ENCODE measurements at regions of chr1 and their contacts with region 1.

Region 1: DNA sequence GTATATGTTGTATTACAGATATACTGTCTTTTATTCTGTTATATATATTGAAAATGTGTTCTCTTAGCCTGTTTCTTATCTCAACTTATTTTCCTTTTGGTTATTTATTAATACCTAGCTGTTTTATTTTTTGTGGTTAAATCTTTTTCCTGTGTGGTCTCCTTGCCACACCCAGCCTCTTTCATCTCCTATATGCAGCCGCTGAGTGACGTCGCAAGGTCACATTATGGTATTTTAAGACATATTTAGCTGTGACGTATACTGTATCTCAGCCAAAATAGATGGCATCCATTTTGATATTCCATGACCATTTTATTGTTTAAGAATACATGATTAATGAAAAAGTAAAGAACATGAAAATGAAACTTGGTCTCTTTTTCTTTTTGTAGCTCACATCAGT is 29.1 kb downstream of the CENPF start:
- DNase-seq: peak; percentile 54
- ATAC-seq: no peak
- H3K4me3 Mint-ChIP-seq: no peak overlapping the region
- H3K27ac Mint-ChIP-seq: peak overlapping the region; percentile 44
- H3K4me1 Mint-ChIP-seq: peaks cover 16% of the 10 kb centered on the region
- H3K27me3 Mint-ChIP-seq: no peaks in the 10 kb centered on the region

Region 2: DNA sequence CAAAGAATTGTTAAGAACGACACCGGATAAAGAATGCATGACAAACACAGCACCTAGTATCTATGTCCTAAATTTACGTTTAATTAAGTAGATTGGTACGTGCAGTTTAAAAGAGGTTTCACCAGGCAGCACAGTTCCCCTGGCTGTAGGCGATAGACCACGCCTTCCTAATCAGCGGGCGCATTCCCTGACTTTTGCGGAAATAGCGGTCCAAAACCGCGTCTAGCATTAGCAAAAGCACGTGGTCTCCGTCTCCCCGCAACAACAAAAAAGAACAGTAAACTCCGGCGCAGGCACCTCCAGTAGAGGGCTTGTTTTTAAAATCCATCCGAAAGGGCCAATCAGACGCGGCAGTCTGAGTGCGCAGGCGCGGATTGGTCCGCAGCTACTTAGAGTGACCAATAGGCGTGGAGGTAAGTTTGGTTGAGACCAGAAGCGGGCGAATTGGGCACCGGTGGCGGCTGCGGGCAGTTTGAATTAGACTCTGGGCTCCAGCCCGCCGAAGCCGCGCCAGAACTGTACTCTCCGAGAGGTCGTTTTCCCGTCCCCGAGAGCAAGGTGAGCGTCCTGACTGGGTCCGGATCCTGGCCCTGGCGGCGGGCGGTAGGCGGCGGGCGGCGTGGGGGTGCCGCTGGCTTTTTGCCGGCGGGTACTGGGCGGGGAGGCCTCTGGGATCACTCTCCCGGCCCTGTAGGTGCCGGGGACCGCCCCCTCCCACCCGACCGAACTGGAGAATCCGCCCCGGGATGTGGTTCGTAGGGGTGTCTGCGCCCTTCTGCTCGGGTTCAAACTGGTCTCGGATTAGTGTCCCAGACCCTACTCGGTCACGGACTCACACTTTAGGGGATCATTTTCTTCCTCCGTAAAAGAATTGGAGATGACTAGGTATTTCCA is 29.1 kb before region 1 on chr1 and contains the start of gene CENPF:
- CTCF ChIA-PET with region 1: interaction called, 12 read pairs
- POLR2A ChIA-PET with region 1: no interaction called
- DNase-seq: peak; percentile 97
- ATAC-seq: peak; percentile 98
- H3K4me3 Mint-ChIP-seq: peak within 1 kb of the TSS; percentile 92
- H3K27ac Mint-ChIP-seq: peak within 1 kb of the TSS; percentile 96
- H3K4me1 Mint-ChIP-seq: peaks cover 25% of the 10 kb centered on the region
- H3K27me3 Mint-ChIP-seq: no peaks in the 10 kb centered on the region
- total RNA-seq, gene CENPF: 176 to 180 TPM

Region 3: GRCh38 chr1:214617843-214618242 is 14.2 kb before region 1 on chr1:
- CTCF ChIA-PET with region 1: interaction called, 15 read pairs
- POLR2A ChIA-PET with region 1: no interaction called
- DNase-seq: no peak
- ATAC-seq: no peak
- H3K4me3 Mint-ChIP-seq: no peak overlapping the region
- H3K27ac Mint-ChIP-seq: no peak overlapping the region
- H3K4me1 Mint-ChIP-seq: peaks cover 20% of the 10 kb centered on the region
- H3K27me3 Mint-ChIP-seq: no peaks in the 10 kb centered on the region

Region 4: GRCh38 chr1:214648801-214649200 is 16.7 kb after region 1 on chr1:
- CTCF ChIA-PET with region 1: interaction called, 30 read pairs
- POLR2A ChIA-PET with region 1: no interaction called
- DNase-seq: no peak
- ATAC-seq: no peak
- H3K4me3 Mint-ChIP-seq: no peak overlapping the region
- H3K27ac Mint-ChIP-seq: no peak overlapping the region
- H3K4me1 Mint-ChIP-seq: no peaks in the 10 kb centered on the region
- H3K27me3 Mint-ChIP-seq: no peaks in the 10 kb centered on the region

Region 5: DNA sequence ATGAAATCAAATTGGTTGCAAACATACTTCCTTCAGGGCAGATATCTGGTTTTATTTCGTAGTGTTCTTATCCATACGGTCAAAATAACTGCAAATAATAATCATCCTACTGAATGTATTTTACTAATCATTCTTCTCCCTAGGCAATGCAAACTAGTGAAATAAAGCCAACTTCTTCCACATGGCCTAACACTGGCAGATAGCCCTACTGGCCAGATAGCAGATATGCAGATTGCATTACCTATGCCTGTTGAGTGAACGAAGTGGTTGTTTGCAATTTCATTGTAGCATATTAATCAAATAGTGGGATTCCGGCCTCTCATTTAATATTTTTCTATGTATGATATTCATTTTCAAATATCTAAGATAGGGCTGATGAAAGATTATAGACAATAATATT is 87.1 kb after region 1 on chr1:
- CTCF ChIA-PET with region 1: no interaction called
- POLR2A ChIA-PET with region 1: no interaction called
- DNase-seq: no peak
- ATAC-seq: no peak
- H3K4me3 Mint-ChIP-seq: no peak overlapping the region
- H3K27ac Mint-ChIP-seq: no peak overlapping the region
- H3K4me1 Mint-ChIP-seq: no peaks in the 10 kb centered on the region
- H3K27me3 Mint-ChIP-seq: no peaks in the 10 kb centered on the region

Measured in activated CD8-positive, alpha-beta T cell treated with anti-CD3 and anti-CD28 coated beads, Interleukin-2, amount 10 ng/mL, durations not matched to agents 7 days and 5 days (primary cell).